ENCODE measurements at regions of chr12 and their contacts with region 1.

Region 1: DNA sequence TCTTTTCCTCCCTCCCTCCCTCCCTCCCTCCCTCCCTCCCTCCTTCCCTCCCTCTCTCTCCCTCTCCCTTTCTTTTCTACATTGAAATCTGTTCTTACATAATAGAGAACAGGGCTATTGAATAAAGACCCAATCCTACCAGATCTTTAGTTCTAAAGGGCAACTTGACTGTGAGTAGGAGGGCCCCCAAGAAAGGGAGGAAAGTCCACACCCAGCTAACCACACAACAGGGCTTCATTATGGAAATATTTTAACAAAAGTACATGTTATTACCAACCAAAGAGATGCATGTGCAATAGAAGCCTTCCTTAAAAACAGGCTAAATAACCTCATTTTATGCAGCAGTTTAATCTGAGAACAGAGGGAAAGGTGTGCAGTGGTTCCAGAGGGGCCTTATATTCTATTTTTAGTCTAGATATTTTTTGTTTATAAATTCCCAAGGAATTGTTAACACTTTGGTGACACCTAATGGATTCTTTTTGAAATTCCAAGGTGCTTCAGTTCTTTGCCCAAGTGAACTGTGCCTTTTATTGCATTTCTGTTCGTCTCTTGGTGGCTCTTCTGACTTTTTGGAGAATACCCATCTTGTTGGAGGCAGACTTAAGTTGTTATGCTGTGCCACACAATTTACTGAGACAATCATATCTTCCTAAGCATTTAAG is 63.0 kb downstream of the GNS start:
- DNase-seq: no peak
- H3K4me3 ChIP-seq: no peak overlapping the region
- H3K4me3 Mint-ChIP-seq: peak overlapping the region in 6 of 8 donors; percentile 18 to 52 (median 28)
- H3K27ac ChIP-seq: peak overlapping the region; percentile 20
- H3K27ac Mint-ChIP-seq: peak overlapping the region; percentile 65 to 92 (median 83)
- H3K4me1 ChIP-seq: peaks cover 84% of the 10 kb centered on the region
- H3K4me1 Mint-ChIP-seq: peaks cover 60 to 83% (median 73%) of the 10 kb centered on the region in 4 donors
- H3K27me3 ChIP-seq: no peaks in the 10 kb centered on the region
- H3K27me3 Mint-ChIP-seq: no peaks in the 10 kb centered on the region

Region 2: DNA sequence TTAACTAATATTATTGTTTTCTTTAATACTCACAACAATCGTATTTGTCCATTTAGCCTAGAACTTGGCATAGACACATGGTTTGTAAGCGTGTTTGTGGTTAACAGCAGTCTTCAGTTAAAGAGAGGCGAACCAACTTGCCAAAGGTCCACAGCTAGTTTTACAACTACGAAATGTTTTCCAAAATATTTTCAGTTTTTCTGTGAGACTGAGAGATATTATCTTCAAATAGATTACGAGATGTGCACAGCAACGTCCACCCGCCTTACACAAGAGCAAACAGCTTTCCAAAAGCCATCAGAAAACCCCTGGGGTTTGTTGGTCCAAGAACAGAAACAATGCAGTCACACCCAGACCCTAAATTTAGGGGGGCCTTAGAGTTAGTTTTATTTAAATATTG is 144.5 kb before region 1 on chr12:
- CTCF ChIA-PET with region 1: interaction called, 252 read pairs
- POLR2A ChIA-PET with region 1: interaction called, 20 read pairs
- intact Hi-C with region 1: loop called (anchors 1 kb)
- DNase-seq: no peak
- H3K4me3 ChIP-seq: no peak overlapping the region
- H3K4me3 Mint-ChIP-seq: no peak overlapping the region
- H3K27ac ChIP-seq: no peak overlapping the region
- H3K27ac Mint-ChIP-seq: no peak overlapping the region
- H3K4me1 ChIP-seq: peaks cover 8% of the 10 kb centered on the region
- H3K4me1 Mint-ChIP-seq: peaks cover 5 to 9% (median 6%) of the 10 kb centered on the region in 4 donors
- H3K27me3 ChIP-seq: no peaks in the 10 kb centered on the region
- H3K27me3 Mint-ChIP-seq: no peaks in the 10 kb centered on the region

Region 3: GRCh38 chr12:64596252-64596793 is 99.9 kb before region 1 on chr12:
- CTCF ChIA-PET with region 1: interaction called, 10 read pairs
- POLR2A ChIA-PET with region 1: interaction called, 3 read pairs
- intact Hi-C with region 1: no loop called
- DNase-seq: no peak
- H3K4me3 ChIP-seq: no peak overlapping the region
- H3K4me3 Mint-ChIP-seq: peak overlapping the region in 1 of 8 donors; percentile 55
- H3K27ac ChIP-seq: no peak overlapping the region
- H3K27ac Mint-ChIP-seq: peak overlapping the region in 3 of 7 donors; percentile 5 to 66 (median 23)
- H3K4me1 ChIP-seq: peaks cover 43% of the 10 kb centered on the region
- H3K4me1 Mint-ChIP-seq: peaks cover 30 to 49% (median 38%) of the 10 kb centered on the region in 4 donors
- H3K27me3 ChIP-seq: no peaks in the 10 kb centered on the region
- H3K27me3 Mint-ChIP-seq: no peaks in the 10 kb centered on the region

Region 4: DNA sequence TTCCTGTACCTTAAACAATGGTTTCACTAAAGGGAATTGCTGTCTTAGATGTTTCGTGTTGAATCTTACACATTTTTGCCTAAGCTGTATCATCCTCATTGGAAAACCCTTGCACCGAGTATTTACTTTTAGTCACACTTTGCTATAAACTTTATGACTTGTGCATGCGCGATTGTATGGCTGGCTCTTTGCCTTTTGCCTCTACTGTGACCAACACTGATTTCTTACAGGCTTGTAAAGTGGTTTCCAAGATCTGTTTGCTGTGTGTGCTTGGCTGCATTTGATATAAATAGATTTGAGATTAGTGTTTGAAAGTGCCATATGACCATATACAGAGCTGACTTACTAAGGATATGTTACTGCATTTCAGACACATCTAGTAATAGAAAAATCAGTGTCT is 45.4 kb before region 1 on chr12:
- CTCF ChIA-PET with region 1: interaction called, 11 read pairs
- POLR2A ChIA-PET with region 1: no interaction called
- intact Hi-C with region 1: no loop called
- DNase-seq: no peak
- H3K4me3 ChIP-seq: no peak overlapping the region
- H3K4me3 Mint-ChIP-seq: peak overlapping the region in 4 of 8 donors; percentile 10 to 49 (median 28)
- H3K27ac ChIP-seq: no peak overlapping the region
- H3K27ac Mint-ChIP-seq: peak overlapping the region; percentile 24 to 89 (median 77)
- H3K4me1 ChIP-seq: peaks cover 88% of the 10 kb centered on the region
- H3K4me1 Mint-ChIP-seq: peaks cover 59 to 88% (median 75%) of the 10 kb centered on the region in 4 donors
- H3K27me3 ChIP-seq: no peaks in the 10 kb centered on the region
- H3K27me3 Mint-ChIP-seq: no peaks in the 10 kb centered on the region

Region 5: GRCh38 chr12:64669270-64669842 is 26.9 kb before region 1 on chr12:
- CTCF ChIA-PET with region 1: interaction called, 44 read pairs
- POLR2A ChIA-PET with region 1: interaction called, 231 read pairs
- intact Hi-C with region 1: loop called (anchors 1 kb)
- DNase-seq: peak; percentile 82 to 87 (median 83)
- H3K4me3 ChIP-seq: peak overlapping the region; percentile 48 to 61
- H3K4me3 Mint-ChIP-seq: peak overlapping the region; percentile 88 to 96 (median 92)
- H3K27ac ChIP-seq: peak overlapping the region; percentile 77
- H3K27ac Mint-ChIP-seq: peak overlapping the region; percentile 92 to 99 (median 98)
- H3K4me1 ChIP-seq: peaks cover 100% of the 10 kb centered on the region
- H3K4me1 Mint-ChIP-seq: peaks cover 76 to 98% (median 87%) of the 10 kb centered on the region in 4 donors
- H3K27me3 ChIP-seq: no peaks in the 10 kb centered on the region
- H3K27me3 Mint-ChIP-seq: no peaks in the 10 kb centered on the region

Region 6: DNA sequence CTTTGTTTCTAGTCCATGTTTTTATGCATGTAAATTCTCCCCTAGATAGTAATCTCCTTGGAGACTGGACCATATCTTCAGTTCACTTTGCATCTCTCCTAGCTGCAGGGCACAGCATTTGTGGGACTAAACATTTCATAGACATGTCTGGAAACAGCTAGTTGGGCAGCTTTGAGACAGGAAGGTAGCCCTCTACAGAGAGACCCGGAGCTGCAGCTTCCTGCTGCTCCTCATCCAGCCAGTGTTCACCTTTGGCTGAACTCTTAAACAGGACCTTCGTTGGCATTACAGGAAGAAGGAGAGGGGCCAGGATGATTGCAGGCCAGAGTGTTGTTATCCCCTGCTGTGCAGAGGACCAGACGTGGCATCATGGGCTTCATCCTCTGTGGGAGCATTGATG is 10.1 kb after region 1 on chr12:
- CTCF ChIA-PET with region 1: interaction called, 14 read pairs
- POLR2A ChIA-PET with region 1: interaction called, 3 read pairs
- intact Hi-C with region 1: no loop called
- DNase-seq: no peak
- H3K4me3 ChIP-seq: no peak overlapping the region
- H3K4me3 Mint-ChIP-seq: no peak overlapping the region
- H3K27ac ChIP-seq: no peak overlapping the region
- H3K27ac Mint-ChIP-seq: peak overlapping the region in 2 of 7 donors; percentile 59 to 77
- H3K4me1 ChIP-seq: peaks cover 4% of the 10 kb centered on the region
- H3K4me1 Mint-ChIP-seq: peaks cover 9 to 16% (median 12%) of the 10 kb centered on the region in 4 donors
- H3K27me3 ChIP-seq: no peaks in the 10 kb centered on the region
- H3K27me3 Mint-ChIP-seq: no peaks in the 10 kb centered on the region